MCF 10A (cell line): ENCODE measurements at regions of chr5 and their contacts with region 1.

Region 1: GRCh38 chr5:120614531-120615180 is 150.6 kb downstream of the PRR16 start:
- DNase-seq: peak; percentile 49
- H3K4me3 Mint-ChIP-seq: peak overlapping the region; percentile 43
- H3K27ac Mint-ChIP-seq: peak overlapping the region; percentile 93
- H3K4me1 Mint-ChIP-seq: peaks cover 41% of the 10 kb centered on the region
- H3K27me3 Mint-ChIP-seq: no peaks in the 10 kb centered on the region
- CTCF ChIP-seq: no peak

Region 2: DNA sequence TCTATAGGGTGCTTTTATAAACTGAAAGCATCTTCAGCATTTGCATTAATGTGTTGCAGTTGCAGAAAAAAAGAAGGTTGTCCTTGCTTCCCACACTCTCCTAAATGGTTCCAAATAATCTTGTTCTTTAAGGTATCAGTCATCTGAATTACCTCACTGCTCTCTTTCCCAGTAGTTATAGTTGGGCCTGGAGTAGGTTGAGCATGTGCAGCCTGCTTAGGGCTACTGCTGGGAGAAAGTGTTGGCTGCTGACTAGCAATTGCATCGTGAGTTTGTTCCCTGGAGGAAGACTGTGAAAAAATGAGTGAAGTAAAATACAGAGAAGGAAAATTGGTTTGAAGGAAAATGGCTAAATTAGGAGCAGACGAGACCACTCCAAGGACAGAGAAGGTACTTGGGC is 76.0 kb before region 1 on chr5:
- CTCF ChIA-PET with region 1: no interaction called
- POLR2A ChIA-PET with region 1: no interaction called
- intact Hi-C with region 1: loop called (anchors 5 kb)
- DNase-seq: peak; percentile 56
- H3K4me3 Mint-ChIP-seq: peak overlapping the region; percentile 18
- H3K27ac Mint-ChIP-seq: peak overlapping the region; percentile 79
- H3K4me1 Mint-ChIP-seq: peaks cover 25% of the 10 kb centered on the region
- H3K27me3 Mint-ChIP-seq: no peaks in the 10 kb centered on the region
- CTCF ChIP-seq: no peak

Region 3: DNA sequence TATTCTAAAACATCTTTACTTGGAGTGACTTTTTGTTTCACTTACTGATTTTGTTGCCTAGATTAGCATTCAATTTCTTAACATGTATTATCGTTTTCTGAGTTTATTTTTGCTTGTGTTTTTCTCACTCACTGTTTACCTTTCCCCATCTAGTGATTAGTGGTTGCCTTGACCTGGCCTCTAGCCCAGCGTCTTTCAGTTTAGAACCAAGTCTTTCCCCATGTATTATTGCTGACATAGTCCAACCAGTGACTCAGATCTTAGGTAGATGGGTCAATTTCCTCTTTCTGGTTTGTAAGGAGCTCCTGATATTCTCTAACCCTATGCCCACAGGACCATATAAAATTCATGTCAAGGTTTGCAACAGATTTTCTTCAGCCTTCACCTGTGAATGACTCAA is 15.1 kb before region 1 on chr5:
- CTCF ChIA-PET with region 1: interaction called, 16 read pairs
- POLR2A ChIA-PET with region 1: interaction called, 28 read pairs
- intact Hi-C with region 1: no loop called
- DNase-seq: peak; percentile 97
- H3K4me3 Mint-ChIP-seq: peak overlapping the region; percentile 49
- H3K27ac Mint-ChIP-seq: peak overlapping the region; percentile 96
- H3K4me1 Mint-ChIP-seq: peaks cover 48% of the 10 kb centered on the region
- H3K27me3 Mint-ChIP-seq: no peaks in the 10 kb centered on the region
- CTCF ChIP-seq: no peak

Region 4: DNA sequence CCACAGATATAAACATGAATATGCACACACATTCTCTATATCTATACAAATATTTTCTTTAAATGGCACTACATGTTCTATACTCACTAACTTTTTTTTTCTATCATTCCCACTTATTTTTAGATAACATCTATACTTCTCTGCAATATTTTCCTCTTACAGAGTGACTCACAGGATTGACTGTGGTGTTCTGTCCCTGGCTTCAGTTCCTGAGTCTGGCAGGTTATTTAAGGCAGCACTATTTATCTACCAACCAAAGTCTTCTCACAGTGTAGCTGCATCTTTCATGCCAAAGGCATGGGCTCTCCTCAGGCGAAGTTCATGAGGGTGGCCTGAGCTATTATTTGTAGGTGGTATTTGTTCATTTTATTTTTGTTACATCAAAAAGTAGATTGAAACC is 258.4 kb after region 1 on chr5:
- CTCF ChIA-PET with region 1: no interaction called
- POLR2A ChIA-PET with region 1: no interaction called
- intact Hi-C with region 1: no loop called
- DNase-seq: peak; percentile 12
- H3K4me3 Mint-ChIP-seq: no peak overlapping the region
- H3K27ac Mint-ChIP-seq: no peak overlapping the region
- H3K4me1 Mint-ChIP-seq: peaks cover 6% of the 10 kb centered on the region
- H3K27me3 Mint-ChIP-seq: no peaks in the 10 kb centered on the region
- CTCF ChIP-seq: no peak